Activated CD4-positive, alpha-beta T cell treated with anti-CD3 and anti-CD28 coated beads, Interleukin-2, amount 10 ng/mL, durations not matched to agents 24 days and 14 days (primary cell): ENCODE measurements at regions of chr19 and their contacts with region 1.

Region 1: DNA sequence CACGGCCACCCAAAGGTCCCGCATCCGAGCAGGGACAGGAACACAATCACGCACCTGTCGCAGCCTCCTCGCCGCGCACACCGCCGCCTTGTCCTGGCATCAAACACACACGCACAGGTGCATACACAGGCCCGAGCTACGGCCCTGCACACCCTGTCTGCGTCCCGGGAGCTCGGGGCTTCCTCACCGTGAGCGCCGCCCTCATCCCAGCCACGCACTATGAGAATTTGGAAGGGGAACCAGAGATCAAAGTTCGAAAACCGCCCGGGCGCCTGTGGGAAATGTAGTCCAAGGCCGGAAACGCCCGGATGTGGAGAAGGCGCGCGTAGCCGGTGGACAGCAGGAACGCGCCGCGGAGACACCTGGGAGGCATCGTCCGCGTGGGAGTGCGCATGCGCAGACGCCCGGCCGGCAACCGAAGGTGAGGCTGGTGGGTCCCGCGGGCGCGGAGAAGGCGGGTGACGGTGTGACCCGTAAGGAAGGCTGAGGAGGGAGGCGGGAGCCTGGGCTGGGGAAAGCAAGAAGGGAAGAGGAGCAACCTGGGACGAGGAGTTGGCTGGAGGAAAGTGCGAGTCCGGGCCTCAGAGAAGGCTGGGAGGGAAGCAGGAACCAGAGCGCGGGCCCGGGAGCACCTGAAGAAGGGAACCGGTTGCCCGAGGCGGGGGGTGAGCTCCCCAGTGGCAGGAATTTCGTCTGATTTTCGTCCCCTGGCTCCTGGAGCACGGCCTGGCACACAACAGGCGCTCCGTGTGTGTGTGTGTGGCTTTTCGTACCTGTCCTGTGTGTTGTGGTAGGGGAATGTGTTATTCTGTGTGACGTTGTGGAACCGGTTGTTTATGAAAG is at the start of gene ZNF567:
- DNase-seq: peak; percentile 99
- H3K4me3 Mint-ChIP-seq: peak within 1 kb of the TSS; percentile 98
- H3K27ac Mint-ChIP-seq: peak within 1 kb of the TSS; percentile 95
- H3K4me1 Mint-ChIP-seq: peaks cover 28% of the 10 kb centered on the region
- H3K27me3 Mint-ChIP-seq: no peaks in the 10 kb centered on the region
- total RNA-seq, gene ZNF567: 8.2 and 8.3 TPM in 2 replicates

Region 2: GRCh38 chr19:36489118-36489919 is 198.1 kb before region 1 on chr19 and contains the start of gene ZNF566:
- intact Hi-C with region 1: loop called (anchors 1 kb)
- DNase-seq: peak; percentile 97
- H3K4me3 Mint-ChIP-seq: peak within 1 kb of the TSS; percentile 99
- H3K27ac Mint-ChIP-seq: peak within 1 kb of the TSS; percentile 99
- H3K4me1 Mint-ChIP-seq: peaks cover 23% of the 10 kb centered on the region
- H3K27me3 Mint-ChIP-seq: no peaks in the 10 kb centered on the region
- total RNA-seq, gene ZNF566: 7.2 and 8.5 TPM in 2 replicates

Region 3: DNA sequence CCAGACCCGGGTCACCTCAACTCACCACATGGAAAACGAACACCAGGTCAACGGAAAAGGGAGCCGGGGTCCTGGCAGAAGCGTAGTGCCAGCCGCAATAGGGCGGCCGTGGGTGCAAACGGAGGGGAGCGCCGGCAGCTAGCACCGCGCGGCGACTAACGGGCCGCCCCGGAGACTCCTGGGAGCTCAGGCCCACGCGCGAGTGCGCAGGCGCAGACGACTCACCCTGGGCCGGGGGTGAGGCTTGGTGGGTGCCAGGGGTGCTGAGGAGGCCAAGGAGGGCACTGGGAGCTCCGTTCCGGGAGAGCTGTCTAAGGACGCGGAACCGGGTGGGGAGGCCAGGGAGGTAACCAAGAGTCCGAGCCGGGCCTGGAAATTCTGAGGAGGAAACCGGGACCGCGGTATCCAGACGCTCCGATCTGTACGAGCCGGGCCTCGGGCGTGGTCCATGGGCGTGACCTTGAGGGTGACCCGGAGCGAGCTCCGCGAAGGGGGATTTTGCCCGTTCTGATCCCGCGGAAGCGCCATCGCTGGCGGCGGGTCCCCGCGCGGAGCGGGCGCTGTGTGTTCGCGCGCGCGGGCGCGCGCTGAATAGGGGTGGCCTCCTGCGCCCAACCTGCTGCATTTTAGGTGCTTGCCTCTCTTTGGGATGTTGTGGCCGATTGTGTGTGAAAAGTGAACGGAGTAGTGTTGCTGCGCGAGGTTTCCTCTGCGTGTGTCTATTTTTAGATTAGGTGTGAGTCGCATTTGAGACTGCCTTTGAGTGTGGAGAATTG is 82.1 kb before region 1 on chr19 and contains the start of gene ZNF382:
- intact Hi-C with region 1: loop called (anchors 1 kb)
- DNase-seq: peak; percentile 96
- H3K4me3 Mint-ChIP-seq: peak within 1 kb of the TSS; percentile 89
- H3K27ac Mint-ChIP-seq: peak within 1 kb of the TSS; percentile 98
- H3K4me1 Mint-ChIP-seq: peaks cover 22% of the 10 kb centered on the region
- H3K27me3 Mint-ChIP-seq: no peaks in the 10 kb centered on the region
- total RNA-seq, gene ZNF382: 9.5 and 13.2 TPM in 2 replicates

Region 4: GRCh38 chr19:36837906-36838783 is 150.7 kb after region 1 on chr19 and contains the start of gene ZNF790:
- intact Hi-C with region 1: loop called (anchors 5 kb)
- DNase-seq: peak; percentile 94
- H3K4me3 Mint-ChIP-seq: no peak within 1 kb of the TSS
- H3K27ac Mint-ChIP-seq: peak within 1 kb of the TSS; percentile 49
- H3K4me1 Mint-ChIP-seq: peaks cover 4% of the 10 kb centered on the region
- H3K27me3 Mint-ChIP-seq: no peaks in the 10 kb centered on the region
- total RNA-seq, gene ZNF790: 5.1 and 6.7 TPM in 2 replicates

Region 5: DNA sequence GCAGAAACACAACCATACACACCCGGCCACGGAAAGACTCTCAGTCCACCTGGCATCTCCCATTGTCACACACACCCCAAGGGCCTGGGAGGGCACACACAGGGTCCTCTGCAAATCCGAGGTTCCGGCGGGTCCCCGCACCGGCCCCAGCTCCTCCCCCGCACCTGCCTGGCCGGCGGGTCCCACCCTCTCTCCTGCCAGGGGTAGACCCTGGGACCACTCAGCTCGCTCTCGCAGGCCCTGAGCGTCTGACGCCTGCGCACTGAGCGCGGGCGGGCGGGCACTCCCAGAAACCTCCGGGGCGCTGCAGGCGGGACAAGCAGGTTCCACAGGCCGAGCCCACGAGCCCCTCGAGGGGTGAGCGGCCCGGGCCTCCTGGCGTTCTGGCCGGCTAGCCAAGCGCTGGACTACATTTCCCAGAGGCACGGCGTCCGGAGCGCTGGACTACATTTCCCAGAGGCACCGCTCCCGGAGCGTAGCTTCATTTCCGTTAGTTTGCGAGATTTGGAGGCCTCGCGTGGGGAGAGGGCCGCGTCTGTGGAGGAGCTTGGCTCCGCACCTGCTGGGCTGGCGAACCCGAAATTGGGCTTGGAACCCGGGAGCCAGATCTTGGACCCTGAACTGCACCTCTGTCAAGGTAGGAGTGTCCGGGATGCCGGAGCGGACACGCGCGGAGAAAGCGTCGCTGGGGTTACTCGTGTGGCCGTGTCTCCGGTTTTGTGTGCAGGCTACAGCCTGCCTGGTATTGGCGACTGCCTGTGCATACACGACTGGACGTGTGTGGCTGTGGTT is 390.7 kb after region 1 on chr19 and contains the start of gene ZNF420:
- intact Hi-C with region 1: loop called (anchors 5 kb)
- DNase-seq: peak; percentile 96
- H3K4me3 Mint-ChIP-seq: peak within 1 kb of the TSS; percentile 91
- H3K27ac Mint-ChIP-seq: peak within 1 kb of the TSS; percentile 92
- H3K4me1 Mint-ChIP-seq: peaks cover 17% of the 10 kb centered on the region
- H3K27me3 Mint-ChIP-seq: no peaks in the 10 kb centered on the region
- total RNA-seq, gene ZNF420: 9.8 and 11.9 TPM in 2 replicates